ENCODE measurements at regions of chrX and their contacts with region 1.

Region 1: DNA sequence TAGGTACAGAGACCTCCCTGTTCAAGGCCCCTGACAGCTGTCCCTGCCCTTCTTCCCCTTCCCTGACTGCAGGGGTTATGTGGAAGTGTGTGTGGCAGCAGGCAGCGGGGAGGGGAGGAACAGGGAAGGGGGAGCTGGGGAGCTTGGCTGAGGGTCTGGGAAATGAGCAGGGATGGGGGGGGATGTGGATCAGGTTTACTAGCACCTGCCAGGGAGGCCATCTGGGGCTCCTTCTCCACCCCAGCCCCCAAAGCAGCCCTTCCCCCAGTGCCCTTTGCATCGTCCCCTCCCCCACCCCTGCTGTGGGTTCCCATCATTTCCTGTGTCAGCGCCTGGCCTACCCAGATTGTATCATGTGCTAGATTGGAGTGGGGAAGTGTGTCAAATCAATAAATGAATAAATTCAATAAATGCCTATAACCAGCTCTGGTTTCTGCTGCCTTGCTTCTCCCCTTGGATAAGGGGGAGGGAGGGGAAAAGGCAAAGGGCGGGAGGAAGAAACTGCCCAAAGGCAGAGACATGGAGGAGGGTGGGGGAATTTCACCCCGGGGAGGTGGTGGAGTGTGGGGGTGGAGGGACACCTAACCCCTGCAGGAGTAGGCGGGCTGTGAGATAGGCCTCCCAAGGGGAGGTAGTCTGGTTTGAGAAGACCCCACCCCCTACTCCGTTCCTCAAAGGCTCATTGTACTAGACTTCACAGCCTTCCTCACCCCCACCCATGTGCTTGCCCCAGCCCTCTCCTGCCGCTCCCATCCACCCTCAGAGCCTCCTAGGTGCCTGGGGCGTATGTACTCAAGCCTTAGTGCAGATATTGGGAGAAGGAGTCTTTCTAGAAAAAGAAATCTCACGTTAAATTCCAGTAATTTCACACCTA is 3.2 kb downstream of the CXorf65 start:
- DNase-seq: peak in 34 of 35 experiments; percentile 29 to 72 (median 56)
- ATAC-seq: peak; percentile 38 to 65 (median 44)
- H3K4me3 ChIP-seq: peak overlapping the region; percentile 30 to 61
- H3K4me3 Mint-ChIP-seq: peak overlapping the region; percentile 53 to 80 (median 65)
- H3K27ac ChIP-seq: peak overlapping the region; percentile 82
- H3K27ac Mint-ChIP-seq: peak overlapping the region; percentile 90 to 97
- H3K4me1 ChIP-seq: peaks cover 27 to 95% of the 10 kb centered on the region in 2 experiments
- H3K4me1 Mint-ChIP-seq: peaks cover 85 to 92% (median 91%) of the 10 kb centered on the region in 3 donors
- H3K27me3 ChIP-seq: no peaks in the 10 kb centered on the region
- H3K27me3 Mint-ChIP-seq: no peaks in the 10 kb centered on the region

Region 2: GRCh38 chrX:71118032-71118984 is 15.0 kb after region 1 on chrX and contains the start of gene MED12:
- CTCF ChIA-PET with region 1: interaction called in 1 of 2 experiments, 37 read pairs
- POLR2A ChIA-PET with region 1: interaction called, 9 to 28 read pairs
- DNase-seq: peak; percentile 56 to 84 (median 75)
- ATAC-seq: peak; percentile 93 to 96 (median 94)
- H3K4me3 ChIP-seq: peak within 1 kb of the TSS; percentile 69 to 82
- H3K4me3 Mint-ChIP-seq: peak within 1 kb of the TSS; percentile 80 to 84 (median 81)
- H3K27ac ChIP-seq: peak within 1 kb of the TSS; percentile 89
- H3K27ac Mint-ChIP-seq: peak within 1 kb of the TSS; percentile 90 to 91
- H3K4me1 ChIP-seq: peaks cover 7 to 46% of the 10 kb centered on the region in 2 experiments
- H3K4me1 Mint-ChIP-seq: peaks cover 25 to 40% (median 33%) of the 10 kb centered on the region in 3 donors
- H3K27me3 ChIP-seq: no peaks in the 10 kb centered on the region
- H3K27me3 Mint-ChIP-seq: peaks cover 0 to 4% of the 10 kb centered on the region in 2 donors
- total RNA-seq, gene MED12: 63.8 to 78.3 (median 72.0) TPM

Measured in T-cell (primary cell).